A673 (cell line): ENCODE measurements at regions of chr9 and their contacts with region 1.

Region 1: GRCh38 chr9:79571309-79572031 is at the start of gene TLE4:
- DNase-seq: peak; percentile 100
- H3K4me3 ChIP-seq: peak within 1 kb of the TSS; percentile 89
- H3K27ac ChIP-seq: peak within 1 kb of the TSS; percentile 69
- H3K4me1 ChIP-seq: peaks cover 17% of the 10 kb centered on the region
- H3K27me3 ChIP-seq: no peaks in the 10 kb centered on the region
- CTCF ChIP-seq: no peak
- total RNA-seq, gene TLE4: 21.3 and 24.3 TPM in 2 replicates

Region 2: GRCh38 chr9:79623799-79624721 is 52.6 kb after region 1 on chr9:
- CTCF ChIA-PET with region 1: no interaction called
- POLR2A ChIA-PET with region 1: interaction called, 3 read pairs
- intact Hi-C with region 1: loop called (anchors 1 kb)
- DNase-seq: peak; percentile 94
- H3K4me3 ChIP-seq: peak overlapping the region; percentile 31
- H3K27ac ChIP-seq: peak overlapping the region; percentile 90
- H3K4me1 ChIP-seq: peaks cover 36% of the 10 kb centered on the region
- H3K27me3 ChIP-seq: no peaks in the 10 kb centered on the region
- CTCF ChIP-seq: no peak

Region 3: DNA sequence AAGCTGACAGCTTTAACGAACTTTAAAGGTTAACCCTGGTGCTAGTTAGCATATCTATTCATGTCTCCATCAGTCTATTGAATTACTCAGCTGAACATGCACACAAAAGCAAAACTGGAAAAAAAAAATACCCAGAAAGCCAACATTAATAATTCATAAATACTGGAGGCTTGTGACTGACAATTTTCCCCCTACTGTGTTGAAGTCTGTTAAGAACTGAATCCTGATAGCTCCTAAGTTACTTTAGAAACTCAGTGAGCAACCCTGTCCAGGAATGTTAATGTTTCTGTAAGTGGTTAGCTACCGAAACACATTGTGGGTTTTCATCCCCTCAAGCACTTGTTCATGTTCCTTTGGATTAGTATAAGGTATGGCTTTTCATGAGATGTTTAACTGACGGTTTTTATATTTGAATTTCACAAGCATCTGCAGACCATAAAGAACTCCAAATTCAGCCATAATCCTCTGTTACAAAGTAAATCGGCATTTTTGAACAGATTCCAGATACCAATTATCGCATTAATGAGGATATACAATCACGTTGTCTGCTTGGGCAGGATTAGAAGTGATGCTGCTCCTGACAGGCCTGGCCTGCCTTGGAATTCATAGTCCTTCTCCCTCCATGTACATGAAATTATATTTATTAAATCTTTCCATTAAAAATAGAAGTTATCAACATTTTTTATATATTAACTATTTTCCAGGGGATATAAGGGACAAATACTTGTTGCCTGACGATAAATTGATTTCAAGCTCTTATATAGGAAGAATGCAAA is 331.5 kb after region 1 on chr9:
- CTCF ChIA-PET with region 1: no interaction called
- POLR2A ChIA-PET with region 1: no interaction called
- intact Hi-C with region 1: loop called (anchors 10 kb)
- DNase-seq: peak; percentile 72
- H3K4me3 ChIP-seq: no peak overlapping the region
- H3K27ac ChIP-seq: no peak overlapping the region
- H3K4me1 ChIP-seq: peaks cover 10% of the 10 kb centered on the region
- H3K27me3 ChIP-seq: no peaks in the 10 kb centered on the region
- CTCF ChIP-seq: no peak